Calu3 (cell line): ENCODE measurements at regions of chr11 and their contacts with region 1.

Region 1: GRCh38 chr11:76207642-76208401 is 1.5 kb upstream of the WNT11 start:
- DNase-seq: peak; percentile 87
- H3K4me3 Mint-ChIP-seq: peak overlapping the region; percentile 69
- H3K27ac Mint-ChIP-seq: no peak overlapping the region
- H3K4me1 Mint-ChIP-seq: peaks cover 9% of the 10 kb centered on the region
- H3K27me3 Mint-ChIP-seq: peaks cover 64% of the 10 kb centered on the region
- CTCF ChIP-seq: peak; percentile 88

Region 2: DNA sequence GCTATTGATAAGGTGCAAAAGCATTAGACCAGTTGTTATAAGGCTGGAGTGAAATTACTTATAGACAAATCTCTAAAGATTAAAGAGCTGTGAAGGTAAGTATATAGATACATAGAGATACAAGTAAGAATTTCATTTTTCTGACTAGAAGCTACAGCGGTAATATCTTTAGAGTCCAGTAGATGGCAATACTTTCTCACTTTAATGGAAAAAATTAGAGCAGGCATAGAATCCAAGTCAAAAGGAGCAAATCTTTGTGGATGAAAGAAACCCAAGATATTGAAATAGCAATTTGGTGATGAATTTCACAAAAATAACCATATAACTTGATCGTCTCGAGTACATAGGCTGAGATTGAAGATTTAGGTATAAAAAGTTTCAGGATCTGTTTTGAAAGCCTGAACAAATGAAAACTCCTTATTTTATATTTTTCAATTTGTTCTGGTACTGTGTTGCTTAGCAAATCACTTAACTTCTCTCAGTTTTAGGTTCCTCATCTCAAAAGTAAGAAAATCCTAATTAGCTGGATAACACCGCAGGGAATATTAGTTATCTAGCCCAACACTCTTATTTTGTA is 310.9 kb before region 1 on chr11:
- CTCF ChIA-PET with region 1: interaction called, 6 read pairs
- intact Hi-C with region 1: loop called (anchors 5 kb)
- DNase-seq: no peak
- H3K4me3 Mint-ChIP-seq: no peak overlapping the region
- H3K27ac Mint-ChIP-seq: no peak overlapping the region
- H3K4me1 Mint-ChIP-seq: no peaks in the 10 kb centered on the region
- H3K27me3 Mint-ChIP-seq: no peaks in the 10 kb centered on the region
- CTCF ChIP-seq: peak; percentile 56

Region 3: GRCh38 chr11:76243193-76243956 is 35.6 kb after region 1 on chr11:
- CTCF ChIA-PET with region 1: no interaction called
- intact Hi-C with region 1: no loop called
- DNase-seq: no peak
- H3K4me3 Mint-ChIP-seq: no peak overlapping the region
- H3K27ac Mint-ChIP-seq: no peak overlapping the region
- H3K4me1 Mint-ChIP-seq: no peaks in the 10 kb centered on the region
- H3K27me3 Mint-ChIP-seq: peaks cover 69% of the 10 kb centered on the region
- CTCF ChIP-seq: no peak

Region 4: GRCh38 chr11:76318744-76319384 is 111.0 kb after region 1 on chr11:
- CTCF ChIA-PET with region 1: interaction called, 62 read pairs
- intact Hi-C with region 1: loop called (anchors 2 kb)
- DNase-seq: peak; percentile 84
- H3K4me3 Mint-ChIP-seq: no peak overlapping the region
- H3K27ac Mint-ChIP-seq: no peak overlapping the region
- H3K4me1 Mint-ChIP-seq: peaks cover 9% of the 10 kb centered on the region
- H3K27me3 Mint-ChIP-seq: peaks cover 54% of the 10 kb centered on the region
- CTCF ChIP-seq: peak; percentile 83

Region 5: GRCh38 chr11:76512851-76513653 is 305.2 kb after region 1 on chr11:
- CTCF ChIA-PET with region 1: no interaction called
- intact Hi-C with region 1: loop called (anchors 10 kb)
- DNase-seq: no peak
- H3K4me3 Mint-ChIP-seq: no peak overlapping the region
- H3K27ac Mint-ChIP-seq: no peak overlapping the region
- H3K4me1 Mint-ChIP-seq: no peaks in the 10 kb centered on the region
- H3K27me3 Mint-ChIP-seq: no peaks in the 10 kb centered on the region
- CTCF ChIP-seq: no peak